ENCODE measurements at regions of chr3 and their contacts with region 1.

Region 1: DNA sequence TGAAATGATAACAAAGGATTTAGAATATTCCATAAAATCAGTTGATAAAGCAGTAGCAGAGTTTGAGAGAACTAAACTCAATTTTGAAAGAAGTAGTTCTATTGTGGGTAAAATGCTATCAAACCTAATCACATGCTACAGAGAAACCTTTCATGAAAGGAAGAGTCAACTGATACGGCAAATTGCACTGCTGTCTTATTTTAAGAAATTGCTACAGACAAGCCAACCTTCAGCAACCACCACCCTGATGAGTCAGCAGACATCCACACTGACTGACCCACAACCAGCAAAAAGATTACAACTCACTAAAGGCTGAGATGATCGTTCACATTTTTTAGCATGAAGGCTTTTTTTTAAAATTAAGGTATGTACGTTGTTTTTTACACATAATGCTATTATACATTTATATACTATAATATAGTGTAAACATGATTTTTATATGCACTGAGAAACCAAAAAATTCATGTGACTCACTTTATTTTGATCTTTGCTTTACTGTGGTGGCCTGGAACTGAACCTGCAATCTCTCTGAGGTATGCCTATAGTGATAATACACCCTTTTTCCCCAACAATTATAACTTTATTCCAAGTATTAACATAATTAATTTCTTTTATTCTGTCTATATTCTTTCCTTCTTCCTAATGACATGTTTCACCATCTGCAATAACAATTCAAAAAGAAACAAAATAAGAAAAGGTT is 109.9 kb downstream of the TBC1D5 start:
- DNase-seq: peak; percentile 47 to 75
- ATAC-seq: peak; percentile 99
- H3K4me3 ChIP-seq: no peak overlapping the region
- H3K27ac ChIP-seq: peak overlapping the region; percentile 49 to 71 (median 66)
- H3K4me1 ChIP-seq: peaks cover 18 to 19% of the 10 kb centered on the region in 2 donors
- H3K27me3 ChIP-seq: no peaks in the 10 kb centered on the region
- CTCF ChIP-seq: no peak
- POLR2A ChIP-seq: no peak

Region 2: GRCh38 chr3:17489139-17489538 is 143.4 kb before region 1 on chr3:
- in situ Hi-C with region 1: no loop called
- intact Hi-C with region 1: loop called (anchors 10 kb)
- DNase-seq: no peak
- ATAC-seq: no peak
- H3K4me3 ChIP-seq: no peak overlapping the region
- H3K27ac ChIP-seq: no peak overlapping the region
- H3K4me1 ChIP-seq: no peaks in the 10 kb centered on the region
- H3K27me3 ChIP-seq: no peaks in the 10 kb centered on the region
- CTCF ChIP-seq: no peak
- POLR2A ChIP-seq: no peak

Measured in gastrocnemius medialis (tissue), 4 donors.